ENCODE measurements at regions of chr15 and their contacts with region 1.

Region 1: GRCh38 chr15:95326431-95327182 is 1003.9 kb upstream of the NR2F2 start:
- DNase-seq: peak; percentile 42 to 81 (median 68)
- ATAC-seq: peak; percentile 77 to 87
- H3K4me3 ChIP-seq: peak overlapping the region; percentile 41
- H3K27ac ChIP-seq: peak overlapping the region; percentile 73
- H3K4me1 ChIP-seq: no peaks in the 10 kb centered on the region
- H3K27me3 ChIP-seq: no peaks in the 10 kb centered on the region

Region 2: DNA sequence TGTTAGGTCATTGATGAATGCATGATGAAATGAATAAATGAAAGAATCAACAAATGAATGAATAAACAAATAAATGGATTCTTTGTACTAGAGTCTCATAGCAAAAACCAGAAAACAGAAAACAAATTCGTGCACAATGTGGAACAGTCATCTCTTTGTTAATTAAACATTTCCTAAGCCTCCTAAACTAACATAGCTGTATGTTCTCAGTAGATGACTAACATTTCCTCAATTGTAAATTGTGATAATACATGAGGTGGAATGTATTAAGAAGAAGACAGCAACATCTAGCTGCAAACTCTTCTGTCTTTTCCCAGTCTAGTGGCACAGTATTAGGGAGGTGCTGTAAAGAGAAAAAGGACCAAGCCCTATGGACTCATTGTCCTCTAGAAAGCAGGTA is 74.2 kb before region 1 on chr15:
- intact Hi-C with region 1: no loop called
- DNase-seq: no peak
- ATAC-seq: no peak
- H3K4me3 ChIP-seq: no peak overlapping the region
- H3K27ac ChIP-seq: no peak overlapping the region
- H3K4me1 ChIP-seq: peaks cover 1% of the 10 kb centered on the region
- H3K27me3 ChIP-seq: no peaks in the 10 kb centered on the region

Region 3: GRCh38 chr15:95459273-95459672 is 132.7 kb after region 1 on chr15:
- intact Hi-C with region 1: loop called in 1 of 4 experiments (anchors 10 kb)
- DNase-seq: no peak
- ATAC-seq: peak; percentile 39 to 88
- H3K4me3 ChIP-seq: no peak overlapping the region
- H3K27ac ChIP-seq: peak overlapping the region; percentile 32
- H3K4me1 ChIP-seq: no peaks in the 10 kb centered on the region
- H3K27me3 ChIP-seq: no peaks in the 10 kb centered on the region

Region 4: DNA sequence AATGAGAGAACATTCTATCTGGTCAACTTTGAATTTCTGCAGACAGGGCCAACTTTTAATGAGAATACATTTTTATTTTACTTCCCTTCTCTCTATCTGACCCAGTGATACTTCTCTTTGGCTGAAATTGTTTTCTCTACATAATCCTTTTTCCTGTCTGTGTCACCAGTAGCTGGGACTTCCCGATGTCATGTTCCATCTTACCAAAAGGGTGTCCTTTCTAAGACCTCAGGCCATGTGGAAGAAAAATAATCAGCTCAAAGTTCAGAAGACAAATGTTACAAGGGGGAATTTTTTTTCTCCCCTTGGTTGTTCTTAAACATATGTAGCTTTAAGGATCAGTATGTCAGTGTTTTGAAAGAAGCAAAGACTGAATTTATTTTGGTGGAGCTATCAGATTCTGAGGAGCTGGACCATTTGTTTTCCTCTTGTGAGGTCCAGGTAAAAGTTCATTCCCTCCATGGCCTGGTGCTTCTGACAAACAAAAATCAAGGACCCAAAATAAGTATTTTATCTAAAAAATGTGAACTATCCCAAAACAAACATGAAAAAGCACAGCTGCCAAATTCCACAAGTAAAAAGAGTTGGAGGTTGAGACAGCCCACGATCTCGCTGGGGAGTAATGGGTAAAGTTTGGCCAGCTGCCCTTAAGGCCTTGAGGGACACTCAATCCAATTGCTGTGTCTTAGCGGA is 144.5 kb after region 1 on chr15:
- intact Hi-C with region 1: no loop called
- DNase-seq: peak; percentile 44 to 78 (median 67)
- ATAC-seq: peak; percentile 74 to 81
- H3K4me3 ChIP-seq: no peak overlapping the region
- H3K27ac ChIP-seq: peak overlapping the region; percentile 5
- H3K4me1 ChIP-seq: peaks cover 3% of the 10 kb centered on the region
- H3K27me3 ChIP-seq: no peaks in the 10 kb centered on the region

Measured in right cardiac atrium (tissue), 5 donors.